Mammary epithelial cell (primary cell): ENCODE measurements at regions of chr10 and their contacts with region 1.

Region 1: DNA sequence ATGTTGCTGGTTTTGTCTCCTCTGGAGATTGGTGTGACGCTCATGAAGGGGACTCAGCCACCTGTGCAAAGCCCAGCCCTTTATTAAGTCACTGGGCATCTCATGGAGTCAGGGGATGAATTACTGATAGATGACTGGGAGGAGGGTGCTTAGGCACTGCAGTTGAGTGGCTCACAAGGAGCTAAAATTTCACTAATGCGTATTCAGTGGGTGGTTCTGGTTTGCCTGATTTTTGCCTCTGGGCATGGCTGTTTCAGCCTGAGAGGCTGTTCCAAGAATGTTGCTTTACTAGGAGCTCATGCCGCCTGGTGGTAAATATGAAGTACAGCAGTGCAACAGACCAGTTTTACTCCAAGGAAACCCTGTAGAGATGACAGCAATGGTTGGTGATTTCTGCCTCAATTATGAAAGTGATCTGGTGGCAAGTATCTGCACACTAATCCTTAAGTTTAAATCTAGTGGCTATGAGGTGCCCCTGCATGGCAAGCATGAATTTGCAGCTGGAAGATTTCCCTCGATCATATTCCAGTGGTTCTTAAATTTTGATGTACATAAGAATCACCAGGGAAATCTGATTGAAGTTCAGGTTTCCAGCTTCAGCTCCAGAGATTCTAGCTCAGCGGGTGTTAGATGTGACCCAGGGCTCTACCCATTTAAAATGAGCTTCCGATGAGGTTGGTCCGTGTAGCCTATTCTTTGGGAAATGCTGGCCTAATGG is 19.9 kb downstream of the ACTA2 start:
- DNase-seq: peak; percentile 84
- H3K4me3 ChIP-seq: no peak overlapping the region
- H3K27ac ChIP-seq: no peak overlapping the region
- H3K4me1 ChIP-seq: peaks cover 18% of the 10 kb centered on the region
- H3K27me3 ChIP-seq: no peaks in the 10 kb centered on the region
- CTCF ChIP-seq: peak; percentile 88 to 91

Region 2: DNA sequence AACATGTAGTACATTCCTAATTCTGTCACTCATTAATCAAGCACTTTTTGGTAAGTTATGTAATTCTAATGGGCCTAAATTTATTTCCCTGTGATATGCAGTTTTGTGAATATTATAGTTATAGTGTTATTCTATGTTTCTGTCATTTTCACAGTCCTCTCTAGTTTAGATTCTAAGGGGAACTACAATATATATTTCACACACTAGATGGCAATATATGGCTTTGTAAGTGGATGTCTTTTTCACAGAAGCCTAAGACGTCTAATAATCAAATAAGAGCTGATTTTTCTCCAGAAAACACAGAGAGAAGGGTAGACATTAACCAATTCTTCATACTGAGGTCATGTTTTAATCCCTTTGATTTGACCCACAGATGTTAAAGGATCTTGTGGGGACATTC is 367.6 kb before region 1 on chr10:
- CTCF ChIA-PET with region 1: interaction called, 5 read pairs
- dilution Hi-C with region 1: no loop called
- in situ Hi-C with region 1: no loop called
- intact Hi-C with region 1: loop called (anchors 1 kb)
- DNase-seq: peak; percentile 13
- H3K4me3 ChIP-seq: no peak overlapping the region
- H3K27ac ChIP-seq: no peak overlapping the region
- H3K4me1 ChIP-seq: no peaks in the 10 kb centered on the region
- H3K27me3 ChIP-seq: no peaks in the 10 kb centered on the region
- CTCF ChIP-seq: peak; percentile 40 to 43

Region 3: GRCh38 chr10:88616251-88616977 is 316.3 kb before region 1 on chr10:
- CTCF ChIA-PET with region 1: no interaction called
- dilution Hi-C with region 1: no loop called
- in situ Hi-C with region 1: no loop called
- intact Hi-C with region 1: no loop called
- DNase-seq: no peak
- H3K4me3 ChIP-seq: no peak overlapping the region
- H3K27ac ChIP-seq: no peak overlapping the region
- H3K4me1 ChIP-seq: no peaks in the 10 kb centered on the region
- H3K27me3 ChIP-seq: no peaks in the 10 kb centered on the region
- CTCF ChIP-seq: no peak

Region 4: GRCh38 chr10:88835096-88835909 is 97.4 kb before region 1 on chr10:
- CTCF ChIA-PET with region 1: interaction called, 28 read pairs
- dilution Hi-C with region 1: no loop called
- in situ Hi-C with region 1: loop called (anchors 5 kb)
- intact Hi-C with region 1: loop called (anchors 1 kb)
- DNase-seq: peak; percentile 78
- H3K4me3 ChIP-seq: no peak overlapping the region
- H3K27ac ChIP-seq: no peak overlapping the region
- H3K4me1 ChIP-seq: no peaks in the 10 kb centered on the region
- H3K27me3 ChIP-seq: no peaks in the 10 kb centered on the region
- CTCF ChIP-seq: peak; percentile 86 to 90

Region 5: DNA sequence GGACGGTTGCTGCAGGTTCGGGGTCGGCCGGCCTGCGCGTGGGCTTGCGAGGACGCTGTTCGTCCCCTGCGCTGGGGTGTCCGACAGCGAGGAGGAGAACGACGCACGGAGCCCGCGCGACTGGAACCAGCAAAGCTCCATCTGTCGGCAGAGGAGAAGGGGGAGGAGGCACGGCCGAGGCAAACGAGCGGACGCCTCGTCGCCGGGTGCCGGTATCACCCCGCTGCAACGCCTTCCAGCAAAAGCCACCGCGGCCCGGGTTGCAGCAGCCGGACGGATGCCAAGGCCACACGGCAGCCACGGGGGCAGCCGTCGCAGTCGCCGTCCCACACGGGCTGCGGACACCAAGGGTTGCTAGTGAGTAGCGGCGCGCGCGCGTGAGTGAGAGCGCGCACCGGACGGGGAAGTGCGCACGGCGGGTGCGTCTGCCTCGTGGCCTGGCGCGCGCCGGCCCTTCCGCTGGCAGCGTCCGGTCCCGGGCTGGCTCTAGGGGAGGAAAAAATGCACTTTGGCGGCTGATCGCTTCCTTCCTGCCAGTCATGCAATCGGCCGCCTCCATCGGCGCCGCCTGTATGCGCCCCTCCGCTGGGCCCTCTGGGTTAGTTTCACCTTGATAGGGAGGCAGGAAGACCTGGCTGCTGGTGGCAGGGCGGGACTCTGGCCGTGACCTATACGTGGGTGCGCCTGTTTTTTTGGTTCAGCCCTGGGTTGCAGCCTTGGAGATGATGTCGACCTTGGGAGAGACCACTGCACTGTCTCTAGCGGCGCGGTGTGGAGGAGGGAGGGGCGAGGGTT is 52.2 kb before region 1 on chr10:
- CTCF ChIA-PET with region 1: interaction called, 5 read pairs
- dilution Hi-C with region 1: no loop called
- in situ Hi-C with region 1: no loop called
- intact Hi-C with region 1: loop called (anchors 5 kb)
- DNase-seq: peak; percentile 83
- H3K4me3 ChIP-seq: peak overlapping the region; percentile 76 to 96 (median 78)
- H3K27ac ChIP-seq: peak overlapping the region; percentile 71
- H3K4me1 ChIP-seq: peaks cover 35% of the 10 kb centered on the region
- H3K27me3 ChIP-seq: no peaks in the 10 kb centered on the region
- CTCF ChIP-seq: peak in 1 of 2 donors; percentile 44

Region 6: GRCh38 chr10:88974446-88975376 is 42.0 kb after region 1 on chr10:
- CTCF ChIA-PET with region 1: no interaction called
- dilution Hi-C with region 1: no loop called
- in situ Hi-C with region 1: no loop called
- intact Hi-C with region 1: no loop called
- DNase-seq: peak; percentile 31
- H3K4me3 ChIP-seq: peak overlapping the region; percentile 44 to 74 (median 55)
- H3K27ac ChIP-seq: peak overlapping the region; percentile 65
- H3K4me1 ChIP-seq: peaks cover 16% of the 10 kb centered on the region
- H3K27me3 ChIP-seq: no peaks in the 10 kb centered on the region
- CTCF ChIP-seq: no peak

Region 7: GRCh38 chr10:88990384-88991160 is 57.9 kb after region 1 on chr10 and contains the start of gene FAS:
- CTCF ChIA-PET with region 1: interaction called, 12 read pairs
- dilution Hi-C with region 1: no loop called
- in situ Hi-C with region 1: loop called in 1 of 2 experiments (anchors 5 kb)
- intact Hi-C with region 1: loop called (anchors 1 kb)
- DNase-seq: peak; percentile 96
- H3K4me3 ChIP-seq: peak within 1 kb of the TSS; percentile 87 to 94 (median 93)
- H3K27ac ChIP-seq: peak within 1 kb of the TSS; percentile 97
- H3K4me1 ChIP-seq: peaks cover 27% of the 10 kb centered on the region
- H3K27me3 ChIP-seq: no peaks in the 10 kb centered on the region
- CTCF ChIP-seq: no peak
- total RNA-seq, gene FAS: 50.0 to 71.8 TPM

Region 8: DNA sequence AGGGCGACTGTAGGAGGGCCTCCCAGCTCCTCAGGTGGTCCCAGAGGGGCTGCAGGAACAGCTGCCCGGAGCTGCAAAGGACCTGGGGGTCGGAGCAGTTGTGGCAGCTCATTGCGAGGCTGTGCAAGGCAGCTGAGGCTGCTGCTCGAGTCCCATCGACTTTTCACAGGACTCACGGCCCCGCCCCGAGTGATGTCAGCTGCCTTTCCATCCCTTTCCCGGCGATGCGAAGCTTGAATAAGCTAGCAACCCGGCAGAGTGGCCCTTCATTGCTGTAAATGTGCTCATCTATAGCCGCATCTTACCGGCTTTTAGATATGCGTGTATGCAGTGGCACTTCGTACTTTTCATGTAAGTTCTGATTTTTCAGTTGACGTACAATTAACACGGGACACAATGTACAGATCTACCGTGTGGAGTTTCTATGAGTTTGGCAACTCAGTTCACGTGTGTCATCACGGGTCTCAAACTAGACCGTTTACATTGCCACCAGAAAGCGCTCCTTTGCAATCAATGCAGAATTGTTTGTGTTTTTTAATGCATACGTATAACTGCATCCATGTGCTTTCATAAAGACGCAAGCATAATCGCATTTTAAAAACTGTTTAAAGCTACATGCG is 274.6 kb after region 1 on chr10 and contains the start of gene CH25H:
- CTCF ChIA-PET with region 1: interaction called, 3 read pairs
- dilution Hi-C with region 1: loop called (anchors 5 kb)
- in situ Hi-C with region 1: loop called in 1 of 2 experiments (anchors 5 kb)
- intact Hi-C with region 1: no loop called
- DNase-seq: peak; percentile 66
- H3K4me3 ChIP-seq: peak within 1 kb of the TSS; percentile 37 to 43 (median 40)
- H3K27ac ChIP-seq: no peak within 1 kb of the TSS
- H3K4me1 ChIP-seq: peaks cover 19% of the 10 kb centered on the region
- H3K27me3 ChIP-seq: peaks cover 6% of the 10 kb centered on the region
- CTCF ChIP-seq: no peak
- total RNA-seq, gene CH25H: 0.17 TPM in 1 of 2 donors, not detected in the other